ENCODE measurements at regions of chr7 and their contacts with region 1.

Region 1: DNA sequence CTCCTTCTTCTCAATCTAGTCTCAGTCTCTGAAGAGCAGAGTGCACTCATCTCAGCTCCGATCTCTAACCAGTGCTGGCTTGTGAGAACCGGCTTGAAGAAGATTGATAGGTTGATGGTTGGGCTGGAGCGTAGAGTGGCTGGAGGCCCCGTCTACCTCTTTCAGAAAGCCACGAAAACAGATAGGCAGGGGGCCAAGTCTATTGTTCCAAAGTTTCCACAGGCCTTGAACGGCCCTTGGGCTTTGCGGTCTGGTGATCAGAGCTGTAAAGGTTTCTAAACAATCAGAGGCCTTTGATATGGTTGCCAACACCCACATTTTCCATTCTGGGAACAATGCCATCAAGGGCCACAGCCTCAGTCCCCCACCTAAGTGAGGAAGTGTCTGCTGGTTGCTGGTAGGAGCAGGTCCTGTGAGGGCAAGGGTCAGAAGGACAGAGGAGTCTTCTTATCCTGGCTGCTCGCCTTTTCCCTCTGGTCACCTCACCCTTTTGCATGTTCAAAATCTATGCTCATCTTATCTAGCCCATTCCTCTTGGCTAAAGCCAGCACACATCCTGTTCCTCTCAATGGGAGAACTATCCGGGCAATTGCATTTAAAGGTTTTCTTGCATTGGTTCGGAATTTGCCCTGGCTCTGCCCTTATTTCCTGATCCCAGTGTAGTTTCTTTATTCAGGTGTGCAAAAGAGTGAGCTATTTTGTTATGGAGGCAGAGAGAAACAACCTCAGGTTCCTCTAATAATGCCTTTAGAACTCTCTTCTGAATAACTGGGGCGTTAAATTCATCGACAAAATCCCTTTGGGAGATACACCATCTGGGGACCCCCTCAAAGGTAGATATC is 70.3 kb upstream of the KMT2E start:
- DNase-seq: peak; percentile 93
- ATAC-seq: peak; percentile 57
- H3K4me3 Mint-ChIP-seq: peak overlapping the region; percentile 83
- H3K27ac Mint-ChIP-seq: peak overlapping the region; percentile 100
- H3K4me1 Mint-ChIP-seq: peaks cover 64% of the 10 kb centered on the region
- H3K27me3 Mint-ChIP-seq: no peaks in the 10 kb centered on the region
- CTCF ChIP-seq: no peak

Region 2: DNA sequence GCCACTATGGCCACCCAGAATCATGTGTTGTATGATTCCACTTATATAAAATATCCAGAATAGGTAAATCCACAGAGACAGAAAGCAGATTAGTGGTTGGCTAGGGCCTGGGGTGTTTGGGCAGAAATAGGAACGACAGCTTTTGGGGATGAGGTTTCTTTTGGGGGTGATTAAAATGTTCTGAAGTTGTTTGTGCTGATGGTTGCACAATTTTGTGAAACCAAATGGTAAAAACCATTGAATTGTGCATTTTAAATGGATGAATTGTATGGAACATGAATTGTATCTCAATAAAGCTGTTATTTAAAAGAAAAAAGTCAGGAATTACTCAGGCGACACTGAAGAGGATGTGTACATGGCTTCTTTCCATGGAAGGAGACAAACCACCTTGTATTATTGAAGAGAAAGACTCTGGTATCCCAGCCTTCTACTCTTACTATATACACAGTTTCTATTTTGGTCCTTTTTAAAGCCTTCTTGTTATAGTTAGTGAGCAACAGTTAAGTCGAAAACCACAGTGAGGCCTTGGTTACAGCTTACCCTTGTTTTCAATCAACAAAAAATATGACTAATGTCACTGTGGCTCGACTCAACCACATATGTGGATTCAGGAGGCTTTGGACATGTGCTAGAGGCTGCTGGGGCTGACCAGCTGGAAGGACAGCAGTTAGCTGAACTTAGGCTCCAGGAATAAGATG is 13.2 kb after region 1 on chr7:
- CTCF ChIA-PET with region 1: interaction called, 3 read pairs
- POLR2A ChIA-PET with region 1: interaction called, 28 read pairs
- intact Hi-C with region 1: no loop called
- DNase-seq: peak; percentile 69
- ATAC-seq: peak; percentile 77
- H3K4me3 Mint-ChIP-seq: peak overlapping the region; percentile 4
- H3K27ac Mint-ChIP-seq: peak overlapping the region; percentile 97
- H3K4me1 Mint-ChIP-seq: peaks cover 31% of the 10 kb centered on the region
- H3K27me3 Mint-ChIP-seq: no peaks in the 10 kb centered on the region
- CTCF ChIP-seq: no peak

Region 3: GRCh38 chr7:105173586-105173985 is 229.9 kb after region 1 on chr7:
- CTCF ChIA-PET with region 1: no interaction called
- POLR2A ChIA-PET with region 1: no interaction called
- intact Hi-C with region 1: no loop called
- DNase-seq: no peak
- ATAC-seq: no peak
- H3K4me3 Mint-ChIP-seq: no peak overlapping the region
- H3K27ac Mint-ChIP-seq: no peak overlapping the region
- H3K4me1 Mint-ChIP-seq: peaks cover 16% of the 10 kb centered on the region
- H3K27me3 Mint-ChIP-seq: no peaks in the 10 kb centered on the region
- CTCF ChIP-seq: no peak

Region 4: GRCh38 chr7:105298439-105298907 is 354.8 kb after region 1 on chr7:
- CTCF ChIA-PET with region 1: no interaction called
- POLR2A ChIA-PET with region 1: no interaction called
- intact Hi-C with region 1: loop called (anchors 5 kb)
- DNase-seq: peak; percentile 64
- ATAC-seq: peak; percentile 88
- H3K4me3 Mint-ChIP-seq: peak overlapping the region; percentile 55
- H3K27ac Mint-ChIP-seq: peak overlapping the region; percentile 84
- H3K4me1 Mint-ChIP-seq: peaks cover 50% of the 10 kb centered on the region
- H3K27me3 Mint-ChIP-seq: no peaks in the 10 kb centered on the region
- CTCF ChIP-seq: no peak